HepG2 (cell line): ENCODE measurements at regions of chr1 and their contacts with region 1.

Region 1: DNA sequence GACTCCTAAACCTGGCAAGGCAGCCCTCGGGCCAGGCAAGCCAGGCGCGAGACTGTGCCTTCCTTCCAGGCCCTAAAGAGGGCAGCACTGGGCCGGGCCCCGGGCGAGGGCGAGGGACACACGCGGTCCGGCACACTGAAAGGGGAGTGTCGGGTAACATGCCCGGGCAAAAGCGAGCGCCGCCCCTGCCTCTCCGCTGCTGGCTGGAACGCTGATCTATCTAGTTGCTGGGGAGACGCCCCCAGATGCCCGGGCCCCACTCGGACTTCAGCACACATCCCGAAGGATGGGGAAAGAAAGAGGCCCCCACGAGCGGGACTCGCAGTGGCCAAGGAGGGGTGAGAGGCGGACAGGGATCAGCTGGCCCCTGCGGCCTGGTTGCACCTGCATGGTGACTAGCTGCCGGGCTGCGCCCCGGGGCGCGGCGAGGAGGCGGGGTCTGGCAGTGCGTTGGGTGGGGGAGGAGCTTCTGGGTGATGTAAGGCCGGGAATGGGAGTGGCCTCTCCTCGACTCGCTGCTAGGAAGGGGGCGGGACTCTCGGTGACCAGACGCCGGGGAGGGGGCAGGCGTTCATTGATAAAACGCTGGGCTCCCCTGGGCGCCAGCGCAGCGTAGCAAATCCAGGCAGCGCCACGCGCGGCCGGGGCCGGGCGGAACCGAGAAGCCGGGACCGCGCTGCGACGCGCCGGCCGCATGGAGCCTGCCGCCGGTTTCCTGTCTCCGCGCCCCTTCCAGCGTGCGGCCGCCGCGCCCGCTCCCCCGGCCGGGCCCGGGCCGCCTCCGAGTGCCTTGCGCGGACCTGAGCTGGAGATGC is at the start of gene PLK3:
- DNase-seq: peak; percentile 92
- ATAC-seq: peak; percentile 86
- H3K4me3 ChIP-seq: peak within 1 kb of the TSS; percentile 69 to 91 (median 90)
- H3K27ac ChIP-seq: peak within 1 kb of the TSS; percentile 94
- H3K4me1 ChIP-seq: peaks cover 44% of the 10 kb centered on the region
- H3K27me3 ChIP-seq: no peaks in the 10 kb centered on the region
- CTCF ChIP-seq: peak; percentile 98
- EP300 ChIP-seq: peak; percentile 13 to 54; a peak in 1 of 4 replicates
- POLR2A ChIP-seq: peak in 1 of 2 experiments; percentile 92; a peak in 2 of 4 replicates
- RAD21 ChIP-seq: peak; percentile 92
- total RNA-seq, gene PLK3: 4.5 and 9.8 TPM in 2 replicates

Region 2: DNA sequence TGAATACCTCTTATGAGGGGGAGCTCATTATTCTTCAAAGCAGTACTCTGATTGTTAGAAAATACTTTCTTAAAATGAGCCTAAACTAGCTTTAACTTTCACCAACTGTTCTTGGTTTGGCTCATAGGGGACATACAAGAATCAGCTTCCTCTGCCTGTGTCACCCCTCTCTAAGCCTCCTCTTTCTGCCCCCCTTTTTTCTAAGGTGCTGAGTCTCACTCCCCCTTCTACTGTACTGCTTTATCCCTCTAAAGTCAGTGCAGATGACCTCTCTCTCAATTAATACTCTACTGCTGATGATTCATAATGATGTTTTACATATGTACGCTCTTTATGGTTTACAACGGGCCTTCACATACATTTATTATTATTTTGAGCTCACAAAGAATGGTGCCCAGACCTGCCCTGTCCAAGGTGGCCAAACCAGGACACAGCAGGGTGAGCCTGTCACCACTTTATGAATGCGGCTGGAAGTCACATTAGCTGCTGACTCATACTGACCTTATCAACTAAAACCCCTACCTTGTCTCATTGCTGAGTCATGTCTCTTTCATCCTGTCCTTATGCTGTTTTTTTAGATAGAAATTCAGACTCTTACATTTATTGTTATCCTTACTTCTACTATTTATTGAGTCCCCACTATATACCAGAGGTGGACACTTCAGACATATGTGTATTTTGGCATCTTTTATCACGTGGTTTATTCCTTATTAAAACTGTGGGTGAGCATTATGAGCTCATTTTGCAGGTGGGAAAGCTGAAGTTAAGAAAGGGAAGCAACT is 268.0 kb before region 1 on chr1:
- CTCF ChIA-PET with region 1: no interaction called
- POLR2A ChIA-PET with region 1: no interaction called
- in situ Hi-C with region 1: no loop called
- intact Hi-C with region 1: no loop called
- DNase-seq: peak; percentile 74
- ATAC-seq: peak; percentile 77
- H3K4me3 ChIP-seq: no peak overlapping the region
- H3K27ac ChIP-seq: no peak overlapping the region
- H3K4me1 ChIP-seq: peaks cover 24% of the 10 kb centered on the region
- H3K27me3 ChIP-seq: no peaks in the 10 kb centered on the region
- CTCF ChIP-seq: no peak
- EP300 ChIP-seq: peak in 1 of 2 experiments; percentile 28; a peak in 1 of 4 replicates
- POLR2A ChIP-seq: no peak
- RAD21 ChIP-seq: no peak

Region 3: GRCh38 chr1:44780583-44781121 is 19.3 kb before region 1 on chr1:
- CTCF ChIA-PET with region 1: no interaction called
- POLR2A ChIA-PET with region 1: interaction called, 21 read pairs
- in situ Hi-C with region 1: no loop called
- intact Hi-C with region 1: no loop called
- DNase-seq: no peak
- ATAC-seq: no peak
- H3K4me3 ChIP-seq: no peak overlapping the region
- H3K27ac ChIP-seq: no peak overlapping the region
- H3K4me1 ChIP-seq: peaks cover 51% of the 10 kb centered on the region
- H3K27me3 ChIP-seq: no peaks in the 10 kb centered on the region
- CTCF ChIP-seq: no peak
- EP300 ChIP-seq: no peak
- POLR2A ChIP-seq: peak; percentile 26 to 56; a peak in 2 of 4 replicates
- RAD21 ChIP-seq: no peak

Region 4: DNA sequence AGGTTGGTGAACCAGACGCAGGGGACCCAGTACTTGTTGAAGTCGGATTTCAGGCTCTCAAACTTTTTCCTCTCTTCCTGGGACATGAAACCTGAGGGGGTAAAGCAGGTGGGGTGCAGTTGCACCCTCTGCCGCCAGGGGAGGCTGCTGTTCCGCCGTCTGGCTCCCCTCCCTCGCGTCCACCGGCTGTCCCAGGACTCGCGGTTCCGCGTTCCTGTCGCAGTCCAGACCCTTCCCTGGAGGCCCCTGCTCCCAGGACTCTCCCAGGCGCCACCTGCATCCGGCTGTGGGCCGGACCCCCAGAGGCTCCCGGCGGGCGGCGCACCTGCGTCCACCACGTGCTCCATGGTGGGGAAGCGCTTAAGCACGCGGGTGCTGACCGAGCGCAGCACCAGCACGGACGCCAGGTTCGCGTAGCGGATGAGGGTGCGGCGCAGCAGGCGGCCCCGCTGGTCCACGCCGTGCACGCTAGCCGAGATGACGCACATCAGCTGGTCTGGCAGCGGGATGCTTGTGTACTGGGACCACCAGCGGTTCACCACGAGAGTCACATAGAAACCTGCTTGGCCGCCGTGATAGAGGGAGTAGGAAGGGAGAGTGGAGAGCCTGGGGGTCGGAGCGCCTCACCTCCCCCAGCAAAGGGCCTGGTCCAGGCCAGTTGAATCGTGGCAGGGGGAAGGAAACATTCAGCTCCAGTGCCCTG is 13.7 kb before region 1 on chr1:
- CTCF ChIA-PET with region 1: no interaction called
- POLR2A ChIA-PET with region 1: interaction called, 20 read pairs
- in situ Hi-C with region 1: no loop called
- intact Hi-C with region 1: no loop called
- DNase-seq: peak; percentile 60
- ATAC-seq: peak; percentile 23
- H3K4me3 ChIP-seq: peak overlapping the region in 2 of 3 experiments; percentile 34 to 79; a peak in 3 of 6 replicates
- H3K27ac ChIP-seq: no peak overlapping the region
- H3K4me1 ChIP-seq: peaks cover 61% of the 10 kb centered on the region
- H3K27me3 ChIP-seq: peaks cover 3 to 17% of the 10 kb centered on the region in 2 experiments; a peak in 2 of 5 replicates
- CTCF ChIP-seq: peak; percentile 91
- EP300 ChIP-seq: peak; percentile 9 to 62; a peak in 1 of 4 replicates
- POLR2A ChIP-seq: no peak; a peak in 1 of 4 replicates
- RAD21 ChIP-seq: peak; percentile 87

Region 5: DNA sequence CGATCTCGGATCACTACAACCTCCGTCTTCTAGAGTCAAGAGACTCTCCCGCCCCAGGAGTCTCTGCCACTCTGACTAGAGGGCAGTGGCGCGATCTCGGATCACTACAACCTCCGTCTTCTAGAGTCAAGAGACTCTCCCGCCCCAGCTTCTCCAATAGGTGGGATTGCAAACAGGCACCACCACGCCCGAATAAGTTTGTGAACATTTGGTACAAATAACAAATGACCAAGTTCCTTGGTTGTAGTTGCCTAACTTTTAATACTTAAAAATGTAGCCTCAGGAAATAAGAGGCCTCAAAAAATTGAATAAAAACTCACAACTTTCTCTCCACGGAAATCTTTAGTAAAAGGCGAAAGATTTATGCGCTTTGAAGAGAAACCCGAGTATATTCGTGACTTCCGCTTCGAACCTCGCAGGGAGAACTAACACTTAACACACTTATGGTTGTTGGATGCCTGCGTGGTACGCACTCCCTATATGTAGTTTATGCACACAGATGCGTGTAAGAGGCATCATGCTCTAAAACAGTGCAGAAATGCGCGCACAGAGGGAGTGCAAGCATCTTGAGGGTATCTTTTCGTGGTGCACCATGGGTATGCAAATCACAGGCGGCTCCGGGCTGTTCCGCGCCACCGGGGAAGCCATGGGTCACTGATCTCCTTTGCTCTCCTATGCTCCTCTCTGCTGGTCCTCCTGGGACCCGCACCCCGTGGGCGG is 19.8 kb after region 1 on chr1:
- CTCF ChIA-PET with region 1: no interaction called
- POLR2A ChIA-PET with region 1: interaction called, 570 read pairs
- in situ Hi-C with region 1: no loop called
- intact Hi-C with region 1: no loop called
- DNase-seq: peak; percentile 90
- ATAC-seq: peak; percentile 89
- H3K4me3 ChIP-seq: peak overlapping the region; percentile 57 to 80 (median 64)
- H3K27ac ChIP-seq: peak overlapping the region; percentile 100
- H3K4me1 ChIP-seq: peaks cover 30% of the 10 kb centered on the region
- H3K27me3 ChIP-seq: no peaks in the 10 kb centered on the region
- CTCF ChIP-seq: peak; percentile 36; the same call in 1 of the 2 replicates
- EP300 ChIP-seq: peak; percentile 64 to 75; a peak in 2 of 4 replicates
- POLR2A ChIP-seq: peak in 1 of 2 experiments; percentile 100; a peak in 2 of 4 replicates
- RAD21 ChIP-seq: peak; percentile 38